ENCODE measurements at regions of chr9 and their contacts with region 1.

Region 1: GRCh38 chr9:113807173-113808061 is 68.7 kb upstream of the ZNF618 start:
- DNase-seq: no peak
- ATAC-seq: peak; percentile 83

Region 2: DNA sequence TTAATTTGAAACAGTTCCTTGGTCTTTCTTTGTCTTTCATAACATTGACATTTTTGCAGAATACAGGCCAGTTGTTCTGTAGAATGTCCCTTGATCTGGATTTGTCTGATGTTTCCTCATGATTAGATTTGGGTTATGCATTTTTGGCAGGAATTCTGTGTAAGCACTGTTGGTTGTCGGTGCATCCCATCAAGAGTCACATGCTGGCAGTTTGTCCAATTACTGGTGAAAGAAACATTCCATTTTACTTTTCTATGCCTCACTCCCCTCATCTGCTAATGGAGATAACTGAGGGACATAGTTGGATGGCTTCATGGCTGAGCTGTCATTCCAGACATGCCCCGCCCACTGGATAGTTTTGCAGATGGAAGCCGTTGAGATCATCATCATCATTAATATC is 61.1 kb after region 1 on chr9:
- intact Hi-C with region 1: no loop called
- DNase-seq: no peak
- ATAC-seq: no peak

Region 3: GRCh38 chr9:114033397-114034103 is 226.1 kb after region 1 on chr9:
- intact Hi-C with region 1: loop called (anchors 2 kb)
- DNase-seq: peak; percentile 61
- ATAC-seq: peak; percentile 81

Measured in left ventricle myocardium superior (tissue), 1 donor.